Left ventricle myocardium superior (tissue), 1 donor: ENCODE measurements at regions of chr17 and their contacts with region 1.

Region 1: GRCh38 chr17:59331129-59331928 is at the start of gene YPEL2:
- DNase-seq: peak; percentile 99
- ATAC-seq: peak; percentile 89
- total RNA-seq, gene YPEL2: 38.9 TPM

Region 2: GRCh38 chr17:59366773-59367657 is 35.7 kb after region 1 on chr17:
- intact Hi-C with region 1: loop called (anchors 5 kb)
- DNase-seq: peak; percentile 47
- ATAC-seq: peak; percentile 80

Region 3: DNA sequence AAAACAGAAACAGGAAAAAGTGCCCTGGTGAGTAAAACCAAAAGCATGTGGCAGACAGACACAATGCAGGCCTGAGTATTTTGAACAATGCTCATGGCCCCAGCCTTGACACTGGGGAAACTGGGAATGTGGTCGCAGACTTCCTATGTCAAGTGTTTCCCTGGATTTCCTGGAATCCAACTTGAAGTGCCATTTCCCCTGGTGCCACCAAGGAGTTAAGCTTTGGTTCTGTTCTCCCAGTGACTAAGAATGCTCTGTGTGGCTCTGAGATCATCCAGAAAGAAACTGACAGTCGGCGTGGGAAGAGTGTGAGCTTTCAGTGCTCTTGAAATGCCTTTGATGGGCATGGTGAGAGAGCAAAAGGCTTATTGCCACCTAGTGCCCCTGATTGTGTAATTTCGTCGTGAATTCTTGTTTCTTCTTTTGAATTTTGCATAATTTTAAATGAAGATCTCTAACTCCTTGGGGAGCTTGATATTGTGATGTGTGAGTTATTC is 96.1 kb after region 1 on chr17:
- intact Hi-C with region 1: loop called (anchors 10 kb)
- DNase-seq: no peak
- ATAC-seq: peak; percentile 34

Region 4: GRCh38 chr17:59440784-59441441 is 109.6 kb after region 1 on chr17:
- intact Hi-C with region 1: loop called (anchors 2 kb)
- DNase-seq: peak; percentile 86
- ATAC-seq: peak; percentile 90